ENCODE measurements at regions of chr19 and their contacts with region 1.

Region 1: DNA sequence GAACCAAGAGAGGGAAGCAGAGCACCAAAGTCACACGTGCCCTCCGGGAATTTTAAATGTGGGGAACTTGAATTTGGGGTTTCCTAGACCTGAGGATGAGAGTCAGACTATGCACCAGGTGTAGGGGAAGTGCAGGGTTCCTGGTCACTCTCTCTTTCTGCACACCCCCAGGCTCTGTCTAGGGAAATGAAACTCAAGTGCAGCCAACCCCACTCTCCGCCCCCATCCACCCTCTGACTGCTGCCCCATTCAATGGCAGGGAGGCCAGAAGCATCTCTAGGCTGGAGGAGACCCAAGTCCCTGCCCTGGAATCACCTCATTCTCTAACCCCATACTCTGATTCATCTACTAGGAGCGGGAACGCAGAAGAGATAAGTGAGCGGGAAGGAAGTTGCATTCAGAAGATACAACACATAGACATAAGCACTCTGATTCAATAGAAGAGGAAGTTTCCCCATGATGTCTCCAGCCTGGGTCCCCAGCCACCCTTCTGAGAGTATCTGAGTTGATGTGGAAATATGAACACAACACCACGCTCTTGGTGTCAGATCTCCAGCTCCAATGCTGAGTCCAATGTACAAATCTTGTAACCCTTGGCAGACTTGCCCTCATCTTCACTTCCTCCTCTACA is 4.7 kb upstream of the SIGLEC14 start:
- DNase-seq: no peak
- H3K4me3 Mint-ChIP-seq: no peak overlapping the region
- H3K27ac Mint-ChIP-seq: no peak overlapping the region
- H3K4me1 Mint-ChIP-seq: no peaks in the 10 kb centered on the region
- H3K27me3 Mint-ChIP-seq: no peaks in the 10 kb centered on the region

Region 2: DNA sequence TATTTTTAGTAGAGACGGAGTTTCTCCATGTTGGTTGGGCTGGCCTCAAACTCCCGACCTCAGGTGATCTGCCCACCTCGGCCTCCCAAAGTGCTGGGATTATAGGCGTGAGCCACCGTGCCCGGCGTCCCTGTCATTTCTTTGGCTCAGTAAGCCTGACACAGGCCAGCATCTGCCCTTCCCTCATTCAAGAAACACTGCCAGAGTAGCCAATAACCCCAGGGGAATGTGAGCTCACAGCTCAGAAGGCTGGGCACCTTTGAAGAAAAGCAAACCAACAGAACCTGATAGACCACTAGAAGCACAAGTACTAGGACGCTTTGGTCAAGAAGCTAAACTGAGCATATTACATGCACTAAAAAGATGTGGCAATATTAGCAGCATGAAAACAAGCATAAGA is 35.4 kb before region 1 on chr19:
- intact Hi-C with region 1: no loop called
- DNase-seq: no peak
- H3K4me3 Mint-ChIP-seq: no peak overlapping the region
- H3K27ac Mint-ChIP-seq: no peak overlapping the region
- H3K4me1 Mint-ChIP-seq: no peaks in the 10 kb centered on the region
- H3K27me3 Mint-ChIP-seq: peaks cover 3% of the 10 kb centered on the region

Region 3: GRCh38 chr19:51735759-51736449 is 84.6 kb after region 1 on chr19:
- intact Hi-C with region 1: no loop called
- DNase-seq: no peak
- H3K4me3 Mint-ChIP-seq: no peak overlapping the region
- H3K27ac Mint-ChIP-seq: no peak overlapping the region
- H3K4me1 Mint-ChIP-seq: no peaks in the 10 kb centered on the region
- H3K27me3 Mint-ChIP-seq: no peaks in the 10 kb centered on the region

Region 4: GRCh38 chr19:51777570-51778462 is 126.5 kb after region 1 on chr19:
- intact Hi-C with region 1: loop called (anchors 10 kb)
- DNase-seq: peak; percentile 77
- H3K4me3 Mint-ChIP-seq: no peak overlapping the region
- H3K27ac Mint-ChIP-seq: no peak overlapping the region
- H3K4me1 Mint-ChIP-seq: no peaks in the 10 kb centered on the region
- H3K27me3 Mint-ChIP-seq: peaks cover 9% of the 10 kb centered on the region